Mammary epithelial cell (primary cell): ENCODE measurements at regions of chr3 and their contacts with region 1.

Region 1: GRCh38 chr3:4584456-4585249 is 91.5 kb downstream of the ITPR1 start:
- DNase-seq: peak; percentile 19
- H3K4me3 ChIP-seq: peak overlapping the region; percentile 37 to 50 (median 46)
- H3K27ac ChIP-seq: peak overlapping the region; percentile 49
- H3K4me1 ChIP-seq: peaks cover 61% of the 10 kb centered on the region
- H3K27me3 ChIP-seq: no peaks in the 10 kb centered on the region
- CTCF ChIP-seq: peak in 1 of 2 donors; percentile 39

Region 2: DNA sequence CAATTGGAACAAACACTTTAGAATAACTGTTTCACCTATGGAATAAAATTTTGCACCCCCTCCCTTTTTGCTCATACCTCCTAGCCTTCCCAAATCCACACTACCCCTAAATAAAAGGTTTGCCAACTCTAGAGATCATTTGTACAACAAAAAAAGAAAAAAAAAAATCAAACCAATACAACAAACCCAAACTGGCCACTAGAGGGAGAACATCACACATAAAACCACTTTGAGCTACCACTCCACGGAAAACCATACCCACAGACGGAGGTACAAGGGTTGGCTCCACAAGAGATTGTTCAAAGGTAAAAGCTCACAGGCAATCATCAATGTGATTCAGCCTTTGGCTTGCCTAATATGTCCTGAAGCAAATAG is 233.9 kb before region 1 on chr3:
- CTCF ChIA-PET with region 1: no interaction called
- dilution Hi-C with region 1: no loop called
- in situ Hi-C with region 1: no loop called
- intact Hi-C with region 1: loop called (anchors 1 kb)
- DNase-seq: peak; percentile 41
- H3K4me3 ChIP-seq: no peak overlapping the region
- H3K27ac ChIP-seq: no peak overlapping the region
- H3K4me1 ChIP-seq: no peaks in the 10 kb centered on the region
- H3K27me3 ChIP-seq: no peaks in the 10 kb centered on the region
- CTCF ChIP-seq: peak; percentile 71 to 75

Region 3: DNA sequence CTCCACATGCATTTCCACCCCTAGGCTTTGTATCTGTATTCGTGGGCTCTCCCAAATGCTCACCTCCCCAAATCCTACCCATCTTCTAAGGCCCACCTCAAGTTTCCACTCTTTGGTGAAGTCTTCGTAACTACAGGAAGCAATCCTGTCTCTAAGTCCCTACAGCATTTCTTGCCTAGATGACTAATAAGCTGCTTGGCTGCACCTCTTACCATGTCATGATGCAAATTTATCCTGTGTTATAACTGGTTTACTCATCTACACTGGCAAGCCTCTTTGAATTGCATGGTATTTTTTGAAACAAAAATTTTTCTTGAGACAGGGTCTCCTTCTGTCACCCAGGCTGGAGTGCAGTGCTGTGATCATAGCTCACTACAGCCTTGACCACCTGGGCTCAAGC is 208.2 kb before region 1 on chr3:
- CTCF ChIA-PET with region 1: interaction called, 11 read pairs
- dilution Hi-C with region 1: no loop called
- in situ Hi-C with region 1: no loop called
- intact Hi-C with region 1: no loop called
- DNase-seq: peak; percentile 21
- H3K4me3 ChIP-seq: no peak overlapping the region
- H3K27ac ChIP-seq: no peak overlapping the region
- H3K4me1 ChIP-seq: no peaks in the 10 kb centered on the region
- H3K27me3 ChIP-seq: no peaks in the 10 kb centered on the region
- CTCF ChIP-seq: no peak

Region 4: GRCh38 chr3:4416961-4417360 is 167.7 kb before region 1 on chr3:
- CTCF ChIA-PET with region 1: no interaction called
- dilution Hi-C with region 1: no loop called
- in situ Hi-C with region 1: loop called in 1 of 2 experiments (anchors 10 kb)
- intact Hi-C with region 1: loop called (anchors 1 kb)
- DNase-seq: peak; percentile 100
- H3K4me3 ChIP-seq: no peak overlapping the region
- H3K27ac ChIP-seq: peak overlapping the region; percentile 92
- H3K4me1 ChIP-seq: peaks cover 51% of the 10 kb centered on the region
- H3K27me3 ChIP-seq: no peaks in the 10 kb centered on the region
- CTCF ChIP-seq: peak in 1 of 2 donors; percentile 23

Region 5: GRCh38 chr3:4546346-4547178 is 38.1 kb before region 1 on chr3:
- CTCF ChIA-PET with region 1: no interaction called
- dilution Hi-C with region 1: no loop called
- in situ Hi-C with region 1: no loop called
- intact Hi-C with region 1: no loop called
- DNase-seq: no peak
- H3K4me3 ChIP-seq: no peak overlapping the region
- H3K27ac ChIP-seq: no peak overlapping the region
- H3K4me1 ChIP-seq: no peaks in the 10 kb centered on the region
- H3K27me3 ChIP-seq: no peaks in the 10 kb centered on the region
- CTCF ChIP-seq: no peak

Region 6: DNA sequence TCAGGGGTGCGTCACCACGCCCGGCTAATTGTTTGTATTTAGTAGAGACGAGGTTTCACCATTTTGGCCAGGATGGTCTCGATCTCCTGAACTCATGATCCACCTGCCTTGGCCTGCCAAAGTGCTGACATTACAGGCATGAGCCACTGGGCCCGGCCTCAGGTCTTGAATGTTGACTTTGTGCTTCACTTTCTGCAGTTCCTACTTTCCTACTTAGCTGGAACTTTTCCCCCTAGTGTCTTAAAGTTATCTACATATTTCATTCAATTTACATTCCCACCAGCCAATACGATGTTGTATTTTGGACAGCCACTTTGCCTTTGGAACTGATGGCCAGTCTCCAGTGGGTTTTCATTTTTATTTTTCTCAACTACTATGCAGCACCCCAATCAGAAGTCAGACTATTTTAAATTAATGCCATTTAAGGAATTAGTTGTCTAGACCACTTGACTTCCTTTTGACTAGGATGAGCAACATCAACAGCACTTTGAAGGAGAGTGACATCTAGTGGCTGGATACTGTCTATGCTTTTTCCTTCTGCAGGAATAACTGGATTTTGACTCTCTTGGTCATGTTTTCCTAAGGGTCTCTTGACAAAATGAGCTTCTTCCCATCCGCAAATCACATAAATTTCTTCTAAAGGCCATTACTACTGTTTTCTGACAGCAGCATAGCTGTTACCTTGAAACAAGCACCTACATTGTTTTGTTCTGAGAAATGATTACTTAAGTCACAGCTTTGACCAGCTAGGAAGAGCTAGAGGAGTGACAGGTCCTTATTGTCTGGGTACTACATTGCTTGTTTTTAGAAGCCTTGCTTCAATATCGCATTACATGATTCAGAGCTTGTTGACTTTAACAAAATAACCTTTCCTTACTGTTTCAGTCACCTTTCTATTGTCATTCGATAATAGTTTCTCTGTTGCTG is 48.7 kb after region 1 on chr3:
- CTCF ChIA-PET with region 1: no interaction called
- dilution Hi-C with region 1: no loop called
- in situ Hi-C with region 1: no loop called
- intact Hi-C with region 1: loop called (anchors 5 kb)
- DNase-seq: peak; percentile 35
- H3K4me3 ChIP-seq: no peak overlapping the region
- H3K27ac ChIP-seq: no peak overlapping the region
- H3K4me1 ChIP-seq: no peaks in the 10 kb centered on the region
- H3K27me3 ChIP-seq: no peaks in the 10 kb centered on the region
- CTCF ChIP-seq: peak; percentile 90 to 92

Region 7: DNA sequence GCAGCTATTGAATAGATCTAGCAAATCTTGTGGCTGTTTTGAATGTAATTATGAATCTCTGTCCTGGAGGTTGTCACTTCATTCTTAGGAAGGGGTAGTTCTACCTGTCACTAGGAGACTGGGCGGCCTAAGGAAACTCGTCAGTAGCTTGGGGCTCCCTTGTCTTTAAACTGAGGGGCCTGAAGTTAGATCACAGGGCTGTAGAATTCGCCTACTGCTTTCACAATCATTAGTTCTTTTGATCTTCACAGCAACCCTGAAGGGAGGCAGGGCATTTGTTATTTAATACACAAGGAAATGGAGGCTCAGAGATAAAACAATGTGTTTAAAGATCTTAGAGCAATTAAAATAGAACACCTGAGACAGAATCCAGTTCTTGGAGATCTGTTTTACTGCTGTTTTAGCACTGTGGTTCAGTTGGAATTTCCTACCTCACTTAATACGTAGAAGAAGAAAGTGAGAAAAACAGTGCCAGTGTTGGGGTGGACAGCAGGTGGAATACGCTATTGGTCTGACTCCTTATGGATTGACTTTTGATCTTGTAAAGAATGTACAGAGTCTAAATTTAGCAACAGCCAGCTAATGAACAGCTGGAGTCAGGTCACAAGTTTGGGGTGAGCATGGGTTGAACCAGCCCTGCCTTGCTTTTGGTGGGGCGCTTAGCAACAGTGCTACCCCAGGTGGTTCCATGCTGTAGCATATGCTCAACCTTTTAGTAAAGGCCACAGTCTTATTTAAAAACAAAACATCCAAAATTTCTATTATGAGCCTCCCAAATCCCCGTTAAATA is 323.2 kb after region 1 on chr3:
- CTCF ChIA-PET with region 1: no interaction called
- dilution Hi-C with region 1: no loop called
- in situ Hi-C with region 1: no loop called
- intact Hi-C with region 1: no loop called
- DNase-seq: no peak
- H3K4me3 ChIP-seq: no peak overlapping the region
- H3K27ac ChIP-seq: no peak overlapping the region
- H3K4me1 ChIP-seq: peaks cover 21% of the 10 kb centered on the region
- H3K27me3 ChIP-seq: no peaks in the 10 kb centered on the region
- CTCF ChIP-seq: no peak

Region 8: GRCh38 chr3:4986782-4987537 is 402.3 kb after region 1 on chr3:
- CTCF ChIA-PET with region 1: no interaction called
- dilution Hi-C with region 1: no loop called
- in situ Hi-C with region 1: no loop called
- intact Hi-C with region 1: loop called (anchors 10 kb)
- DNase-seq: peak; percentile 99
- H3K4me3 ChIP-seq: peak overlapping the region; percentile 1 to 31 (median 4)
- H3K27ac ChIP-seq: peak overlapping the region; percentile 96
- H3K4me1 ChIP-seq: peaks cover 49% of the 10 kb centered on the region
- H3K27me3 ChIP-seq: no peaks in the 10 kb centered on the region
- CTCF ChIP-seq: no peak